Panc1 (cell line): ENCODE measurements at regions of chr2 and their contacts with region 1.

Region 1: GRCh38 chr2:3738454-3738853 is 35.1 kb downstream of the DCDC2C start:
- DNase-seq: no peak
- ATAC-seq: peak; percentile 86
- H3K4me3 ChIP-seq: no peak overlapping the region
- H3K27ac ChIP-seq: no peak overlapping the region
- H3K4me1 ChIP-seq: no peaks in the 10 kb centered on the region
- H3K27me3 ChIP-seq: peaks cover 16% of the 10 kb centered on the region
- CTCF ChIP-seq: peak; percentile 61; the same call in 1 of the 2 replicates

Region 2: DNA sequence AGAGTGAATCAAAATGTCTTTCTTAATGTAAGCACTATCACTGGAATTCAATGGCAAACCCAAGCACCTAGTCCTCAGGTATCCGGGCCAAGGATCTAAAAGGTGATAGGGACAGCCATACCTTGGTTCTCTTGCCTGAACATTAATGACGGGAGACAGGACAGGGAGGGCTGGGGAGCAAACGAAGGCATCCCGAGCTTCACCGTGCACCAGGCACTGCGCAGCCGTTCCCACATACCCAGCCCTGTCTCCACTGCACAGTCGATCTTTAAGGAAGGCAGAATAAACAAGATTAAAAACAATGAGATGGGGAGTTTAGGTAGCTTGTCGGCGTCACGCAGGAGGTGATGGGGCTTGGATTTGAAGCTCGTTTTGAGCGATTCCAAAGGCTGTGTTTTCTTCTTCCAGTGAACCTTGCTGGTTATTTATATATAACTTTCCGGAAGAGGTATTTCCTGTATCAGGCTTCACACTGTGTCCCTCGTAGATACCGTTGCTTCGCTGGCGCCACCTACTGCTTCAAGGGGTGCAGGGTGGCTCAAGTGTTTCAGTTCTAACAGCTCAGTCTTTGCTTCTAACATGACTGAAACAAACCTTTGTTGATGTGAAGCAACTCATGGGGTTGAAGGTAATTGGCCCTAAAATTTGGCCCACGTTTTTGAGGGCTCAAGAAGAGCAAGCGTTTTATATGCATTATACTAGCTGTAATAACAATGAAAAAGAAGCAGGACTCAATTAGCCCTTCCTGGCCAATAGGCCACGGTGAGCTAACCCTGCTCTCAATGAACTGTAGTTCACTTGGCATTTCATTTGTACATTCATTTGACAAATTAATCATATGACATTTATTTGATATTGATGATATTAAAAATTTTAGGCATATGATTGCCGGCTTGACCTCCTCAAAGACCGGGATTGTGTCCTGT is 42.3 kb after region 1 on chr2:
- CTCF ChIA-PET with region 1: interaction called, 3 read pairs
- POLR2A ChIA-PET with region 1: no interaction called
- in situ Hi-C with region 1: no loop called
- intact Hi-C with region 1: loop called (anchors 5 kb)
- DNase-seq: peak; percentile 39
- ATAC-seq: peak; percentile 94
- H3K4me3 ChIP-seq: peak overlapping the region in 1 of 2 experiments; percentile 21; a peak in 1 of 4 replicates
- H3K27ac ChIP-seq: no peak overlapping the region
- H3K4me1 ChIP-seq: 0 out of 2 replicates have a peak, but pooled peaks cover 4% of the 10 kb centered on the region
- H3K27me3 ChIP-seq: peaks cover 13% of the 10 kb centered on the region
- CTCF ChIP-seq: peak; percentile 89

Region 3: DNA sequence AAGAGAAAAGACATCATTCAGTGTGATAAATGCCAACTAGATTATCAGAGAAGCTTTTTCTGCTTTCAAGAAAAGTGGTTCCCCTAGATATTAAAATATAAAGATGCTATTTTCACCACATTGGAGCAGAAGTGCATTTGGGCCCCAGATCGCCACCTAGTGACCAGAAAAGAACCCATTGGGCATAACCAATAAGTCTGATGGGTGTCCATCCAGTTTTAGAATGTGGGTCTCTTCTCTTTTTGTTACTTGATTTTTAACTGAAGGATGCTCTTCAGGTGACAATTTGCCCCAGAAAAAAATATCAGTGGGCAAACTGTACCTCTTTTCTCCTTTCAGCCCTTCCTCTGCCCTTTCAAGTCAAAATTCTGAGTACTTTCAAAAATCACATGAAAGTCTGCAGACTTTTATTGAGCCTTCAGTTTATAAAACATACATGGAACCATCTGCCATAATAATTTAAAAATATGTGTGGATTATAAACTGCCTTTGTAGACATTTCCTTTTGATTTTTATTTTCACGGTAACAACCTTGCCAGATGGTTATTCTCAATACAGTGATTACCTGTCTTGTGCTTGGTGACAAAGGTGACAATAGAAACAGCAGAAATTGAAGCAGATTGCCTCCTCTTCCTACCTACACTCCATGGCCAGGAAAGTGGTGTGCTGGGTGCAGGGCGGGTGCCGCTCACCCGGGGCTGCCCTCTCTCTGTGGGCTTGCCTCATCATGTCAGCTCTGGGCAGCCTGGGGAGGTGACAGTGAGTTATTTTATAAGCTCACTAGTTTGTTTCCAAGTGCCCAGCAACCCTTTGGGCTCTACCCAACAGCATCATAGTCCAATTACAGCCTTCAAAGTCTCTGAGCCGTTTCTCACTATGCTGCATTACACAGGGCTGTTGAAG is 89.5 kb after region 1 on chr2:
- CTCF ChIA-PET with region 1: no interaction called
- POLR2A ChIA-PET with region 1: no interaction called
- in situ Hi-C with region 1: no loop called
- intact Hi-C with region 1: loop called (anchors 5 kb)
- DNase-seq: peak; percentile 8
- ATAC-seq: no peak
- H3K4me3 ChIP-seq: no peak overlapping the region
- H3K27ac ChIP-seq: no peak overlapping the region
- H3K4me1 ChIP-seq: no peaks in the 10 kb centered on the region
- H3K27me3 ChIP-seq: peaks cover 4% of the 10 kb centered on the region; the same call in 1 of the 2 replicates
- CTCF ChIP-seq: peak; percentile 72